Heart right ventricle (tissue), 16 donors: ENCODE measurements at regions of chr12 and their contacts with region 1.

Region 1: GRCh38 chr12:107607464-107608392 is 77.9 kb upstream of the PWP1 start:
- DNase-seq: peak; percentile 78 to 80
- ATAC-seq: peak; percentile 46 to 84 (median 82)
- H3K4me3 ChIP-seq: no peak overlapping the region
- H3K27ac ChIP-seq: no peak overlapping the region
- H3K4me1 ChIP-seq: peaks cover 0 to 9% (median 0%) of the 10 kb centered on the region in 9 donors
- H3K27me3 ChIP-seq: peaks cover 0 to 7% (median 0%) of the 10 kb centered on the region in 7 donors
- CTCF ChIP-seq: peak; percentile 87 to 95 (median 93)

Region 2: GRCh38 chr12:106926657-106927056 is 681.1 kb before region 1 on chr12:
- intact Hi-C with region 1: no loop called
- DNase-seq: no peak
- ATAC-seq: no peak
- H3K4me3 ChIP-seq: no peak overlapping the region
- H3K27ac ChIP-seq: no peak overlapping the region
- H3K4me1 ChIP-seq: peaks cover 0 to 5% (median 0%) of the 10 kb centered on the region in 9 donors
- H3K27me3 ChIP-seq: peaks cover 0 to 98% (median 0%) of the 10 kb centered on the region in 7 donors
- CTCF ChIP-seq: no peak

Region 3: GRCh38 chr12:107225635-107226034 is 382.1 kb before region 1 on chr12:
- intact Hi-C with region 1: loop called in 1 of 10 experiments (anchors 10 kb)
- DNase-seq: no peak
- ATAC-seq: no peak
- H3K4me3 ChIP-seq: no peak overlapping the region
- H3K27ac ChIP-seq: no peak overlapping the region
- H3K4me1 ChIP-seq: no peaks in the 10 kb centered on the region
- H3K27me3 ChIP-seq: peaks cover 0 to 35% (median 21%) of the 10 kb centered on the region in 7 donors
- CTCF ChIP-seq: no peak

Region 4: GRCh38 chr12:107402041-107403022 is 205.4 kb before region 1 on chr12:
- intact Hi-C with region 1: loop called in 2 of 10 experiments (anchors 10 kb)
- DNase-seq: peak in 1 of 2 donors; percentile 17
- ATAC-seq: no peak
- H3K4me3 ChIP-seq: no peak overlapping the region
- H3K27ac ChIP-seq: no peak overlapping the region
- H3K4me1 ChIP-seq: peaks cover 0 to 11% (median 0%) of the 10 kb centered on the region in 9 donors
- H3K27me3 ChIP-seq: peaks cover 0 to 4% (median 0%) of the 10 kb centered on the region in 7 donors
- CTCF ChIP-seq: peak in 7 of 9 donors; percentile 31 to 65 (median 46)

Region 5: DNA sequence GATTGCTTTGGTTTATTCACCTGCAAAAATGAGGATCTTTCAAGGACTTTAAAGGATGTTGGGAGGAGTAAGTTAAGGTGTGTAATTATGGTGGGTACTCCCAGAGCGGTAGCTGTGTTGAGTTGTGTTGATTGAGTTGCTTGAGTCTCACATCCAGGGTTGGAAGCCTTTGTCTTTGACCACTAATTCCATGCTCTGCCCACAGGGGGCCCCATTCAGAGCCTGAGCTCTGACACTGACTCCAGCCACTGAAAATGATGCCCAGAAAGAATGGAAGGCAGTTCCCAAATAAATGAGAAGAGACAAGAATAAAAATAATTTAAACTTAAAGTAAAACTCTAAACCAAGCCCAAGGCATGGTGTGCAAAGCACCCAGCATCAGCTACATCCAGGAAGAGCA is 159.5 kb before region 1 on chr12:
- intact Hi-C with region 1: loop called in 2 of 10 experiments (anchors 10 kb)
- DNase-seq: no peak
- ATAC-seq: no peak
- H3K4me3 ChIP-seq: no peak overlapping the region
- H3K27ac ChIP-seq: no peak overlapping the region
- H3K4me1 ChIP-seq: no peaks in the 10 kb centered on the region
- H3K27me3 ChIP-seq: peaks cover 0 to 10% (median 3%) of the 10 kb centered on the region in 7 donors
- CTCF ChIP-seq: peak in 7 of 9 donors; percentile 20 to 47 (median 35)